GM13977 (cell line): ENCODE measurements at regions of chr18 and their contacts with region 1.

Region 1: DNA sequence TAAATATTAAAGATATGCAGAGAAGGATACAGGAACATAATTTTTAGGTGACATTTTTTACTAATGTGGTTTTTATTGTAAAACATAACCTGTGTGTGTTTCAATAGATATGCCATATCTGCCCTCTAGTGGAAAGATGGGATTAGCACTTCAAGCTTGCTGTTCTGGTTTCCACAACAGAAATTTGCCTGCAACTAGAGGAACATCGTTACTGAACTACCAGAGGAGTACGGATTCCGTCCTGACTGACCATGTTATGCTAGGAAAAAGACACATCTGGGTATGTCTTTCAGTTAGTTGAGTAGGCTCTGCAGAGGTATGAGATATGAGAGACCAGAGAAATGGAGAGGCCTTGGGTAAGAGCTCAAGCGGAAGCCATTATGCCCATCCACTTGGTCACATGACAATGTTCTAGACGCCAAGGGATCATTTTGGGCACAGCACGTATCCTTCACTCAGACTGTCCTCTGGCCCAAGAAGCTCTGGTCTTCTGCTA is 104.9 kb downstream of the MBD2 start:
- DNase-seq: peak; percentile 30
- CTCF ChIP-seq: peak; percentile 76

Region 2: DNA sequence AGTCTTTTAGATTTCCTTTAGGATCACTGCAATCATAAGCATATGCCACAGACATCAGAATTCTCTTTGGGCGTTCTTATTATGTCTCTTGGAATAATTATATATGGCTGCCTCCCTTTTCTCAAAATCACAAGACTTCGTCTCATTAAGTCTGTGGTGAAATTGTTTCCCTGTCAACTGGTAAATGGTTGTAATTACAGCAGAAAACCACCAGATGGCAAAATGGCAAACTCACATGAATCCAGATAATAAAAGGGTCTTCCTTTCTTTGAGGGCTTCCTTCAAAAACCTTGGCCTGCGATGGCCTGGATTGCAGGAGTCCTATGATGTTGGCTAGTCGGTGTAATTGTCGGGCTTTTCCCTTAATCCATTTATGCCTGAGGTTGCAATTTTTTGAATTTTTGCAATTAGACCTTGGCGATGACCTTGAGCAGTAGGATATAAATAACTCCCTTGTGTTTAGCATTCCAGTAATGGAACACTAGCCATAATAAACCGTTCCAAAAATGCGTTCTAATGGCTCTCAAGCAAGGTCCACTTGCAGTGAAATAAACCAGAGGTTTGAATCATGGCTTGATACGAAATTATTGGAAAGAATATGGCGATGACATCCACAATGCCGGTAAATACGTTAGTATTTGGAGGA is 551.5 kb before region 1 on chr18:
- in situ Hi-C with region 1: loop called (anchors 25 kb)
- DNase-seq: peak; percentile 45
- CTCF ChIP-seq: peak; percentile 67

Region 3: DNA sequence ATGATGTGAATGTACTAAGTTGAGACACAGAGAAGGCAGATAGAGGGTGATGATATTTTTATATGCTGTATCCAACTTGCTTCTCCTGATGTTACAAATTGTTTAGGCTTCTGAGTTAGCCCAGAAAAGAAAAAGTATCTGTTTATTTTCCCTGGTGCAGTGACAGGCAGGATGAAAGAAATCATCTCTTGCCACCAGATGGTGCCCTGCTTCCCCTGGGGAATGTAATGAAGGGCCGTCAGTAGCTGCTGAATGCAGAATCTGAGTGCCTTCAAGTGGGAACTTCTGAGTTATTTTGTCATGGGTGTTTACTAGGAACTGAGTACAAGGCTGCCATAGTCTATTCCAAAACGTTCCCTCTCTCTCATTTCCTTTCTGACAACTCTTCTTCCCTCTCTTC is 420.7 kb before region 1 on chr18:
- in situ Hi-C with region 1: loop called (anchors 10 kb)
- DNase-seq: peak; percentile 29
- CTCF ChIP-seq: peak; percentile 56

Region 4: DNA sequence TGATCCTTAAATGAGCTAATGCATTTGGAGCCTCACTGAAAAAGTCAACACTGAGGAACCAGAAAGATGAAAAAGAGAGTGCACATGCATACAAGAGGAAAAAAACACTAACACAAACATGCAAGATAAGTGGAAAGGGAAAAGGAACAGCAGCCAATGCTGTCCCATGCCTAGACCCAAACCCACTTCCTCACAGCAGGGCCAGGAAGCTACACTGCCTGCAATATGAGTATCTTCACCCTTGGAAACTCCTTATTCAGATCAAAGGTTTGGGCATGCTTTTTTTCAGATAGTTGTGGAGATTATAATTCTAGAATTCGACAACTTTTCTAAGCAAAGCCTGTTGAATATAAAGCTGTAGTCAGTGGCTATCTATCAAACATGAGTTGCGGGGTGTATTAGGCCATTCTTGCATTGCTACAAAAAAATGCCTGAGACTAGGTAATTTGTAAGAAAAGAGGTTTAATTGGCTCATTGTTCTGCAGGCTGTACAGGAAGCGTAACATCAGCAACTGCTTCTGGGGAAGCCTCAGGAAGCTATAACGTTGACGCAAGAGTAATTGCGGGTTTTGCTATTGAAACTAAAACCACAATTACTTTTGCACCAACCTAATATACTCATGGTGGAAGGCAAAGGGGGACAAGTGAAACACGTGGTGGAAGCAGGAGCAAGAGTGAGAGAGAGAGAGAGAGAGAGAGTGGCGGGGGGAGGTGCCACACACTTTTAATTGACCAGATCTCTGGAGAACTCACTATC is 33.3 kb before region 1 on chr18:
- in situ Hi-C with region 1: no loop called
- DNase-seq: no peak
- CTCF ChIP-seq: no peak

Region 5: GRCh38 chr18:54224379-54225014 is 104.9 kb after region 1 on chr18 and contains the start of gene MBD2:
- in situ Hi-C with region 1: no loop called
- DNase-seq: peak; percentile 90
- CTCF ChIP-seq: peak; percentile 48